Esophagus muscularis mucosa (tissue), 4 donors: ENCODE measurements at regions of chr12 and their contacts with region 1.

Region 1: GRCh38 chr12:26126340-26127284 is 1.8 kb upstream of the BHLHE41 start:
- DNase-seq: peak; percentile 95
- H3K4me3 ChIP-seq: peak overlapping the region; percentile 69 to 75 (median 72)
- H3K27ac ChIP-seq: peak overlapping the region; percentile 96 to 97 (median 97)
- H3K4me1 ChIP-seq: peaks cover 18 to 42% (median 28%) of the 10 kb centered on the region in 4 donors
- H3K27me3 ChIP-seq: no peaks in the 10 kb centered on the region
- CTCF ChIP-seq: peak in 1 of 3 experiments; percentile 9
- EP300 ChIP-seq: no peak
- POLR2A ChIP-seq: no peak

Region 2: GRCh38 chr12:26195641-26196420 is 69.2 kb after region 1 on chr12:
- intact Hi-C with region 1: loop called (anchors 5 kb)
- DNase-seq: no peak
- H3K4me3 ChIP-seq: peak overlapping the region; percentile 65 to 83 (median 73)
- H3K27ac ChIP-seq: peak overlapping the region; percentile 89 to 97 (median 94)
- H3K4me1 ChIP-seq: peaks cover 32 to 49% (median 44%) of the 10 kb centered on the region in 4 donors
- H3K27me3 ChIP-seq: no peaks in the 10 kb centered on the region
- CTCF ChIP-seq: no peak
- EP300 ChIP-seq: no peak
- POLR2A ChIP-seq: no peak

Region 3: GRCh38 chr12:26226629-26227360 is 100.2 kb after region 1 on chr12:
- intact Hi-C with region 1: loop called (anchors 10 kb)
- DNase-seq: no peak
- H3K4me3 ChIP-seq: peak overlapping the region; percentile 49 to 64 (median 56)
- H3K27ac ChIP-seq: peak overlapping the region; percentile 74 to 85 (median 84)
- H3K4me1 ChIP-seq: peaks cover 7 to 25% (median 18%) of the 10 kb centered on the region in 4 donors
- H3K27me3 ChIP-seq: no peaks in the 10 kb centered on the region
- CTCF ChIP-seq: no peak
- EP300 ChIP-seq: no peak
- POLR2A ChIP-seq: no peak

Region 4: DNA sequence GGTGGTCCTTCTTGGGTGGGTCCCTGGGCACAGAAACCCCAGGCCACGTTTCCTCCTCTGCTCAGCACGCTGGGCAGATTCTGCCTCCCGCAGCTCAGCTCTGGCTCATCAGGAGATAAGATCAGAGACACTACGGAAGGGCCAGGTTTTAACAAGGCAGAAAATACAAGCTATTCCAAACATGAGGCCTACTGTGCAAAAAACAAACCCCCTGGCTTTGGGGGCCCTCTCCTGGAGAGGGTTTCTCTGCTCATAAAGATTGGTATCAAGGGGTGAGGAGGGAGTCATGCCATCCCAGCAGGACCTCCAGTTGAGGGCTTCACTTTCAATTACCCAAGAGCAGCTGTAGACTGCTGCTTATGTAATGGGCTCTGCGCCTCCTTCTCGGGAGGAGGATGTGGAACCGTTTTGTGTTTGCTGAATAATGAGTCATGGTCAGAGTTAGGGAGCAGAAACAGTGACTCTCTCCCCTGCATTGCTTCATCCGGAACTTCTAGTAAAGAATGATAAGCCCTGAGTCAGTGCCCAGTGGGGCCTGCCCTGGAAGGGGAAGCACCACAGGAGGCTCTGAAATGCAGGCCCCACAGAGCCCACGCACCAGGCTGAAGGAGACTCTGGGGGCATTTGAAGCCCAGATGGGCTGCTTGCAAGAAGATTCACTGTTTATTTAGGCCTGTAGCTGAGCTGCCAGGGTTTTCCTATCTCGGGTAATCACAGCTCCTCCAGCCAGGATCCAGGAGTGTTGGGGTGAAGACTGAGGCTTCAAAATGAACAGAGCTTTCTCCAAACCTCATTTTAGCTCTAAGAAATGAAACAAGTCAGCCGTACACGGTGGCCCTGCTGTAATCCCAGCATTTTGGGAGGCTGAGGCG is 148.1 kb after region 1 on chr12:
- intact Hi-C with region 1: loop called (anchors 10 kb)
- DNase-seq: peak; percentile 96
- H3K4me3 ChIP-seq: no peak overlapping the region
- H3K27ac ChIP-seq: peak overlapping the region; percentile 74 to 85 (median 80)
- H3K4me1 ChIP-seq: peaks cover 31 to 48% (median 37%) of the 10 kb centered on the region in 4 donors
- H3K27me3 ChIP-seq: no peaks in the 10 kb centered on the region
- CTCF ChIP-seq: peak in 1 of 3 experiments; percentile 10
- EP300 ChIP-seq: no peak
- POLR2A ChIP-seq: peak; percentile 41